ENCODE measurements at regions of chr16 and their contacts with region 1.

Region 1: GRCh38 chr16:31873556-31874365 is at the start of gene ZNF267:
- DNase-seq: peak; percentile 79 to 96 (median 93)
- ATAC-seq: peak; percentile 79
- H3K4me3 ChIP-seq: peak within 1 kb of the TSS; percentile 90
- H3K4me3 Mint-ChIP-seq: peak within 1 kb of the TSS; percentile 89 to 99 (median 94)
- H3K27ac ChIP-seq: peak within 1 kb of the TSS; percentile 94
- H3K27ac Mint-ChIP-seq: peak within 1 kb of the TSS; percentile 85 to 98 (median 96)
- H3K4me1 ChIP-seq: peaks cover 66 to 72% of the 10 kb centered on the region in 2 donors
- H3K4me1 Mint-ChIP-seq: peaks cover 54 to 95% (median 84%) of the 10 kb centered on the region in 7 donors
- H3K27me3 ChIP-seq: no peaks in the 10 kb centered on the region
- H3K27me3 Mint-ChIP-seq: no peaks in the 10 kb centered on the region
- total RNA-seq, gene ZNF267: 34.8 to 74.9 (median 48.8) TPM

Region 2: DNA sequence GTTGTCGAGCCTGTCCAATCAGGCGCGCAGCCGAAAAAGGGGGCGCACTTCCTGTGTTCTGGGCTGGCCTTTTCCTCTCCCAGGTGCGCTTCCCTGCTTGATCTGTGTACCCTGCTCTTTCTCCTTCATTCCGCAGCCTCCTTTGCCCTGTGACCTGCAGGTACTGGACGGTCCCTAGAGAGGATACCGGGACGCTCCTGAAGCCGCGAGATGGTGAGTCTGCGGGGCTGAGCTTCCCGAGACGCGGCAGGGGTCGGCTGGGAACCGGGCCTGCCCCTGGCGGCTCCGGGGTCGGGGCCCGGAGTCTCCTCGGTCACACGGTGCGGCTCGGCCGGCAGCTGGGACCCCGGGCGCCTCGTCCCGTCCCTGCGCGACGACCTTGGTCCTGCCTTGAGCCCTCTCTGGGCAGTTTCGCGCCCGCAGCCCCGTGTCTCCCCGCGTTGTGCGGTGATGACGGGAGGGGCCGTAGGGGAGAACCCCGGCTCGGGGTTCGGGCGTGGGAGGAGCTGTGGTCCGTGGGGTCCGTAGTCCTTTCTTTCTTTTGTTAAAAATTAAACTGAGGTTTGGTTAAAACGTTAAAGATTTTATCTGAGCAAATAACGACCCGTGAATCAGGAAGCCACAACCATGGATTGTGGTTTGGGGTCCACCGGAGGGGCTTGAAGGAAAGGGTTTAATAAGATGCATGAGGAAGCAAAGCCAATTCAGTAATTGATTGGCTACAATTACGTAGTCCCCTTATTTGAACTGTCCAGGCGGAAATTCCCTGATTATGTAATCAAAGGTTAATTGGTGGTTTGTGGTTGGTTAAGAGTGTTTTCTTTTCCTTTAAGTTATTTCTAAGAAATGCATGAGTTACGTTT is 173.0 kb before region 1 on chr16:
- CTCF ChIA-PET with region 1: interaction called, 3 read pairs
- POLR2A ChIA-PET with region 1: interaction called, 9 read pairs
- intact Hi-C with region 1: loop called (anchors 1 to 2 kb)
- DNase-seq: peak; percentile 67 to 86 (median 81)
- ATAC-seq: peak; percentile 84
- H3K4me3 ChIP-seq: peak overlapping the region; percentile 95
- H3K4me3 Mint-ChIP-seq: peak overlapping the region; percentile 87 to 95 (median 91)
- H3K27ac ChIP-seq: peak overlapping the region; percentile 90
- H3K27ac Mint-ChIP-seq: peak overlapping the region; percentile 86 to 97 (median 93)
- H3K4me1 ChIP-seq: peaks cover 19 to 28% of the 10 kb centered on the region in 2 donors
- H3K4me1 Mint-ChIP-seq: peaks cover 20 to 39% (median 37%) of the 10 kb centered on the region in 7 donors
- H3K27me3 ChIP-seq: no peaks in the 10 kb centered on the region
- H3K27me3 Mint-ChIP-seq: peaks cover 0 to 24% (median 0%) of the 10 kb centered on the region in 5 donors

Region 3: DNA sequence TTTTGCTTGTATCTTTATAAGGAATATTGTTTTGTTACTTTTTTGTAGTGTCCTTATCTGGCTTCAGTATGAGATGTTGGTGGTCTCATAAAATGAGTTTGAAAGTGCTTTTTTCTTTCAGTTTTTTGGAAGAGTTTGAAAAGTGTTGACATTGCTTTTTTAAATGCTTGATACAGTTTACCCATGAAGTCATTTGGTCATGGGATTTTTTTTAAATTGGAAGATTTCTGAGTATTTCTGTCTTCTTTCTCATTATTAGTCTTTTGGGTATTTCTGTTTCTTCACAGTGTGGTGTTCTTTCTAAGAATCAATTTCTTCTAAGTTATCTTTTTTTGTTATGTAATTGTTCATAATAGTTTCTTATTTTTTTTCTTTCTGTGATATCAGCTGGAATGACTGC is 15.0 kb after region 1 on chr16:
- CTCF ChIA-PET with region 1: interaction called, 3 read pairs
- POLR2A ChIA-PET with region 1: interaction called, 17 read pairs
- intact Hi-C with region 1: loop called (anchors 1 kb)
- DNase-seq: no peak
- ATAC-seq: no peak
- H3K4me3 ChIP-seq: no peak overlapping the region
- H3K4me3 Mint-ChIP-seq: peak overlapping the region in 4 of 10 donors; percentile 2 to 55 (median 17)
- H3K27ac ChIP-seq: no peak overlapping the region
- H3K27ac Mint-ChIP-seq: peak overlapping the region in 6 of 9 donors; percentile 17 to 84 (median 38)
- H3K4me1 ChIP-seq: peaks cover 0 to 7% of the 10 kb centered on the region in 2 donors
- H3K4me1 Mint-ChIP-seq: peaks cover 20 to 76% (median 62%) of the 10 kb centered on the region in 7 donors
- H3K27me3 ChIP-seq: no peaks in the 10 kb centered on the region
- H3K27me3 Mint-ChIP-seq: no peaks in the 10 kb centered on the region

Region 4: DNA sequence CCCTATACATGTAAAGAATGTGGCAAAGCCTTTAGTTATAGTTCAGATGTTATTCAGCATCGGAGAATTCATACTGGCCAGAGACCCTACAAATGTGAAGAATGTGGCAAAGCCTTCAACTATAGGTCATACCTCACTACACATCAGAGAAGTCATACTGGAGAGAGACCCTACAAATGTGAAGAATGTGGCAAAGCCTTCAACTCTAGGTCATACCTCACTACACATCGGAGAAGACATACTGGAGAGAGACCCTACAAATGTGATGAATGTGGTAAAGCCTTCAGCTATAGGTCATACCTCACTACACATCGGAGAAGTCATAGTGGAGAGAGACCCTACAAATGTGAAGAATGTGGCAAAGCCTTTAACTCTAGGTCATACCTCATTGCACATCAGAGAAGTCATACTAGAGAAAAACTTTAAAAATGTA is 42.3 kb after region 1 on chr16:
- CTCF ChIA-PET with region 1: no interaction called
- POLR2A ChIA-PET with region 1: no interaction called
- intact Hi-C with region 1: loop called in 1 of 2 experiments (anchors 5 kb)
- DNase-seq: no peak
- ATAC-seq: no peak
- H3K4me3 ChIP-seq: peak overlapping the region; percentile 4
- H3K4me3 Mint-ChIP-seq: peak overlapping the region in 1 of 10 donors; percentile 40
- H3K27ac ChIP-seq: no peak overlapping the region
- H3K27ac Mint-ChIP-seq: peak overlapping the region in 3 of 9 donors; percentile 20 to 69 (median 38)
- H3K4me1 ChIP-seq: no peaks in the 10 kb centered on the region
- H3K4me1 Mint-ChIP-seq: peaks cover 0 to 15% (median 8%) of the 10 kb centered on the region in 7 donors
- H3K27me3 ChIP-seq: no peaks in the 10 kb centered on the region
- H3K27me3 Mint-ChIP-seq: no peaks in the 10 kb centered on the region